ENCODE measurements at regions of chr6 and their contacts with region 1.

Region 1: DNA sequence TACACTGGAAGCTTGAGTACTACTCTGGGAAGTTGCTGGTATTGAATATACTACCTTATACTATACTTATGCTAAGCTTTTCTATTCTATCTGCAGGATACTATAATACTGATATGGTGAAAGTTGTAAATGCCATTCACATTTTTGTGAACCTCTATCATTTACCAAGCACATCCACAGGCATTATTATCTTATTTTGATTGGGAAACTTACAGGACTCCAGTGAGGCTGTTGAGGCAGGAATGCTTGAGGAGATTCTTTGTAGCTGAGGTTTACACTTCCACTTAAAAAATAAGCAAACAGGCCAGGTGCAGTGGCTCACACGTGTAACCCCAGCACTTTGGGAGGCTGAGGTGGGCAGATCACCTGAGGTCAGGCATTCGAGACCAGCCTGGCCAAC is 442.9 kb downstream of the QKI start:
- DNase-seq: no peak
- ATAC-seq: no peak

Region 2: DNA sequence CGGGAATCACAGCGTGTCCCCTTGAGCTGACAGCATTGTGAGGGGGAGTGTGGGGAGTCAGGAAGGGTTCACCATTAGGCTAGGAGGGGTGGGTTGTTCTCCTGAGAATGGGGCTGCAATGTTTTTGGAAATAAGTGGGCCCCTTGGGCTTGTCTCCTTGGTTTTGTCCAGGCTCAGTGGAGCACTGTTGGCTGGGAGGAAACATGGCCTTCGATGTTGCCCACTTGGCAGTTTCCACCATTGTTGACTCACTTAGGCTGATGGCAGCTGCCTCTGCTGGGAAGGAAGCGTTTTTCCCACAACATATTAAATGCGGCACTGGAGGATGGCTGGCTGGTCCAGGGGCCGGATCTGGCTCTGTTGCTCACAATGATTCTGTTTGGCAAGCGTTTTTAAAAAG is 69.2 kb after region 1 on chr6:
- intact Hi-C with region 1: loop called in 1 of 2 experiments (anchors 10 kb)
- DNase-seq: peak; percentile 46
- ATAC-seq: peak; percentile 75 to 84

Measured in left cardiac atrium (tissue), 4 donors.